GM13976 (cell line): ENCODE measurements at regions of chr4 and their contacts with region 1.

Region 1: DNA sequence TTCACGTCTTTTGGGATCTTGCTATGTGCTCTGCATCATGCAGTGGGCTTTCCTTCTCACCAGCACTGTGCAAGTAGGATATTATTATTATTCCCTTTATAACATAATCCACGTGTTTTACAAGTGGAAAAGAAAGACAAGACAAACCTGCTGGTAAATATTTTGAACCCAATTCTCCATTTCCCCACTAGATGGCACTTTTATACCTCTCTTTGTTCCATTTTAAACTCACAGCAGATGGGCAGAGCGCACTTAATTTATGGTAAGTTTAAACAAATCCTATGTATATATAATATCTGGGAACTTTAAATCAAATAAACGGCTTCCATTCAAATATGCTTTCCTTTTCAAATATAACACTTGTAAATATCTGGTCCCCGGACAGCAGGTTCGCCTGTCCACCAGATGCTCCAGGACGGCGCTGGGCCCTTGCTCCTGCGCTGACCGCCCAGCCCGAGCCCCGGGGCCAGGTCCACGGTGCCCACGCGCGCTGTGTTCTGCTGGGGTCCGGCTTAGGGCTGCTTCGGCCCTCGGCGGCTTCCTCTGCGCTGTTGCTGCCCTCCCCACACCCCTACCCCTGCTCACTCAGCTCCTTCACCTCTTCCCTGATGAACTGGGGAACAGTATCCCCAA is 31.1 kb downstream of the F11 start:
- DNase-seq: peak; percentile 74
- CTCF ChIP-seq: peak; percentile 51

Region 2: DNA sequence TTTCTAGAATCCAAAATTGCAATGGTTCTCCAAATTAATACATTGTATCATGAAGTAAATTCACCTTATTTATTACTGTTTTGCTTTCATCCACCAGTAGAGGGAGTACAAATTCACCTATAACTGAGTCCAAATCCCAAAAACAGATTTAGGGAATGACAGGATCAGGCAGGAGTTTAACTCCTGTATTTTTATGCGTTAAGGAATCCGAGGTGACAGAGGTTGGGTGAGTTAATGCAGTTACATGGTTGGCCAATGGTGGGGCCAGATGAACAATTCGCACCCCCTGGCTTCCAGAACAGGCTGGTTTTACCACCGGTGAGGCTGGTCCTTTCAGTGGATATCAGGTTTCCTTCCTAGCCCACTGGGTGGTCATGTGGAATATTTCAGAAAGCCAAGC is 175.8 kb after region 1 on chr4:
- in situ Hi-C with region 1: no loop called
- DNase-seq: no peak
- CTCF ChIP-seq: no peak

Region 3: GRCh38 chr4:186587416-186588018 is 290.4 kb after region 1 on chr4:
- in situ Hi-C with region 1: loop called (anchors 25 kb)
- DNase-seq: peak; percentile 49
- CTCF ChIP-seq: peak; percentile 83